A549 (cell line): ENCODE measurements at regions of chr18 and their contacts with region 1.

Region 1: DNA sequence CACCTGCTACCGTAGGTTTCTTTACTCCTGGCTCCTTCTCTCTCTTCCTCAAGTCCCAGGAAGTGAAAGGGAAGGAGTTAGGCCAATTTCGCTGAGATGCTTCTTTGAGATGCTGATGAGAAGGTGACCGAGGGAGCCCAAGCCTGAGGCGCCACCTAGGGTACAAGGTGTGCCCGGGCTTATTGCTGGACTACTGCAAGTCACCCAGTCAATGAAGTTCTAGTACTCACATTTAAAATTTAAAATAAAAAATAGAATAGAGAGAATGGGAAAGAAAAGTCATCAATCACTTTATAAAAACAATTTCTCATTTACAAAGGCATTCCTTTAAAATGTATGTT is 45.3 kb downstream of the ACAA2 start:
- DNase-seq: peak; percentile 7 to 61
- ATAC-seq: peak; percentile 68 to 74; a peak in 4 of 6 replicates
- H3K4me3 ChIP-seq: no peak overlapping the region
- H3K27ac ChIP-seq: no peak overlapping the region
- H3K4me1 ChIP-seq: no peaks in the 10 kb centered on the region
- CTCF ChIP-seq: peak; percentile 49
- EP300 ChIP-seq: no peak
- POLR2A ChIP-seq: no peak
- RAD21 ChIP-seq: peak; percentile 61 to 72

Region 2: GRCh38 chr18:49127471-49128190 is 640.4 kb before region 1 on chr18:
- CTCF ChIA-PET with region 1: no interaction called
- POLR2A ChIA-PET with region 1: no interaction called
- DNase-seq: no peak
- ATAC-seq: no peak
- H3K4me3 ChIP-seq: no peak overlapping the region
- H3K27ac ChIP-seq: no peak overlapping the region
- H3K4me1 ChIP-seq: no peaks in the 10 kb centered on the region
- CTCF ChIP-seq: no peak
- EP300 ChIP-seq: no peak
- POLR2A ChIP-seq: no peak
- RAD21 ChIP-seq: no peak

Region 3: DNA sequence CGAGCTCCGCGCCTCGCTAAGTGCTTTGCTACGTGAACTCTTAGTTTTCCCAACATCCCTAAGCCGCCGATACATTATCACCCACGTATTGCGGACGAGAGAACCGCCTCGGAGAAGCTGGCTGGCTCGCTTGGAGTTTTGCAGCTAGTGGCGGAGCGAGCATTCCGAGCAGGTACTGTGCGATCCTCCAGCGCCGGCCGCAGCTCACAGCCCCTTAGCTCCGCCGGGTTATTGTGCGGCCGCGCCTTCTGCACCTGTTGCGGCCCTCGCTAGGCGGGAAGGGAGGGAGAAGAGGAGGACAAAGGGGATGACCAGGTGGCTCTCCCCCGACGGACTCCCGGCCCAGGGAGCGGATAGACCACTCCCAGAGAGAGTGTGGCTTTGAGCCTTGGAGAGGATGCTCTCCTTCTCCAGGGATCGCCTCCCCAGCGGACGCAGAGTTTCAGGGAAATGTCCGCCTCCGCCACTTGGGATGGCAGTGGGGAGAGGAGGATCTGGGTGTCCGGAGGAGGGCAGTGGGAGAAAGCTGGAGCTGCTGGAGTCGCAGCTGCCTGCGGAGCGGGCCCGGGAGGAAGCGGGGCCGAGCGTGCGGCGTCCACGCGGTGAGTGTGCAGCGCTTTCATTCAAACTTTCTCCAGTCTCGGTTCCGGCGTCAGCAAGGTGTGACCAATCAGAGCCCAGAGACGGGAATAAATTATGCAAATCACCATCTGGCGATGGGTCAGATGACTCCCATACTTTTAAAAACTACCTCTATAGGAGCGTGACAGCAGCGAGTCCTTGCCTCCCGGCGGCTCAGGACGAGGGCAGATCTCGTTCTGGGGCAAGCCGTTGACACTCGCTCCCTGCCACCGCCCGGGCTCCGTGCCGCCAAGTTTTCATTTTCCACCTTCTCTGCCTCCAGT is 206.5 kb before region 1 on chr18 and contains the start of gene LIPG:
- CTCF ChIA-PET with region 1: interaction called, 20 read pairs
- POLR2A ChIA-PET with region 1: no interaction called
- DNase-seq: peak; percentile 25 to 36
- ATAC-seq: peak; percentile 63 to 70
- H3K4me3 ChIP-seq: peak within 1 kb of the TSS; percentile 45
- H3K27ac ChIP-seq: peak within 1 kb of the TSS; percentile 37 to 48; a peak in 4 of 6 replicates
- H3K4me1 ChIP-seq: peaks cover 10% of the 10 kb centered on the region; the same call in 2 of the 3 replicates
- CTCF ChIP-seq: no peak
- EP300 ChIP-seq: no peak
- POLR2A ChIP-seq: no peak
- RAD21 ChIP-seq: no peak
- polyA plus RNA-seq, gene LIPG: 0.61 and 0.65 TPM in 2 replicates

Region 4: DNA sequence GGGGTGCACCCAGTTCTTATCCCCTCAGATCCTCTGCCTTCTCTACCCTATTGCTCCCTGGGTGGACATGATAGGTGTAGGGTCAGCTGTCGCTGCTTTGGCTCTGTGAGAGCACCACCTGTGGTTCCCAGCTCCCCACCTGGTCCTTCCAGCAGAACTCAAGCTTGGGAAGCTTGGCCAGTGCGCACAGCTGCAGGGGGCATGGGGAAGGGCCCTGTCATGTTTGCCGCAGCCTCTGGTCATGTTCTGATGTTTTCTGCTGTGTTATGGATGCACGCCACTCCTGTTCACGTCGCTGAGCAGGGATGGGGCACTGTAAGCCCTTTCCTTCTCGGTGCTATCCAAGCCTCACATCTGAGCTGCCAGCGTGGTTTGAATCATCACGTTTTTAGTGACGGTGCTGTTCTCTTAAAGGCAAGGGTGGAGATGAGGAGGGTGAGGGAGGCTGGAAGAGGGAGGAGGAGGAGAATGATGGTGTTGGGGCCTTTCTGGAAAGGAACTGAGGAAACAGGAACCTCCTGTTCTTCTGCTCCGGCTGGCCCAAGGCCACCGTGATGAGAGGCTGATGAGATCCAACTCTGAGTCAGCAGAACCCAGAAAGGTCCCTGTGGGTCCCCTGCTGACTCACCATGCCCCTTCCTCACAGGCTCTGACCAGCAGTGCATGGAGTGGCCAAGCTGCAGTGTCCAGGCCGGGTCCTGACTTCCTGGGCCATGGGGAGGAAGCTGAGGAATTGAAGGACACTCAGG is 128.2 kb before region 1 on chr18:
- CTCF ChIA-PET with region 1: no interaction called
- POLR2A ChIA-PET with region 1: no interaction called
- DNase-seq: no peak
- ATAC-seq: no peak
- H3K4me3 ChIP-seq: no peak overlapping the region
- H3K27ac ChIP-seq: no peak overlapping the region
- H3K4me1 ChIP-seq: no peaks in the 10 kb centered on the region
- CTCF ChIP-seq: no peak
- EP300 ChIP-seq: no peak
- POLR2A ChIP-seq: no peak
- RAD21 ChIP-seq: no peak